ENCODE measurements at regions of chr13 and their contacts with region 1.

Region 1: DNA sequence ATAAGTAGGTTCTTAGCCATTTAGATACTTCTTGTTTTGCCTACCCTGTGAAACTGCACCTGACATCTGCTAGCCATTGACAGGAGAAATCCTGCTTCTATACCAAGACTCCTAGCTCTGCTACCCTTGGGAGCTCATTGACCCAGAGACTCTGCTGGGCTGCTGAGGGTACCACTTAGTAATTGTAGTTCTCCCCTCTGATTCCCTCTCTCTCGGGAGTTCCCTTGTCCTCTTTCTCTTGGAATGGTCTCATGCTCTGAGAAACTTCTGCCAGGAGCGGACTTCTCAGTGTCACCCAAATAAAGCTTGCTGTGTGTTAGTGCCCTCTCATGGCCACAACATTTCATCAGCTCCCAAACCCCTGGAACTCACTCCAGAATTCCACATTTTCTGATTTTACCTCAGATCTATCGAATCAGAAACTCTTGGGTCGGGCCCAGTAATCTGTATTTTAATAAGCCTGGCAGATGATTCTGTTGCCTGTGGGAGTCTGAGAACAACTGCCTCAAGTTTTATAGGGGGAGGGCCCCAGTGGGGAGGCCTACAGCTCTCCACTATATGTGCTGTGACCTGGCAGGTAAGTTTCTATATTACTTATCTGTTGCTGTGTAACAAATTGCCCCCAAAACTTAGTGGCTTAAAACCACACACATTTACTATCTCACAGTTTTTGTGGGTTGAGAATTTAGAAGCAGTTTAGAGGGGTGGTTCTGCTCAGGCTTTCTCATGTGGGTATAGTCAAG is 221.1 kb downstream of the TDRD3 start:
- DNase-seq: no peak
- H3K4me3 ChIP-seq: no peak overlapping the region
- H3K27ac ChIP-seq: no peak overlapping the region
- H3K4me1 ChIP-seq: no peaks in the 10 kb centered on the region
- H3K27me3 ChIP-seq: no peaks in the 10 kb centered on the region
- CTCF ChIP-seq: no peak

Region 2: DNA sequence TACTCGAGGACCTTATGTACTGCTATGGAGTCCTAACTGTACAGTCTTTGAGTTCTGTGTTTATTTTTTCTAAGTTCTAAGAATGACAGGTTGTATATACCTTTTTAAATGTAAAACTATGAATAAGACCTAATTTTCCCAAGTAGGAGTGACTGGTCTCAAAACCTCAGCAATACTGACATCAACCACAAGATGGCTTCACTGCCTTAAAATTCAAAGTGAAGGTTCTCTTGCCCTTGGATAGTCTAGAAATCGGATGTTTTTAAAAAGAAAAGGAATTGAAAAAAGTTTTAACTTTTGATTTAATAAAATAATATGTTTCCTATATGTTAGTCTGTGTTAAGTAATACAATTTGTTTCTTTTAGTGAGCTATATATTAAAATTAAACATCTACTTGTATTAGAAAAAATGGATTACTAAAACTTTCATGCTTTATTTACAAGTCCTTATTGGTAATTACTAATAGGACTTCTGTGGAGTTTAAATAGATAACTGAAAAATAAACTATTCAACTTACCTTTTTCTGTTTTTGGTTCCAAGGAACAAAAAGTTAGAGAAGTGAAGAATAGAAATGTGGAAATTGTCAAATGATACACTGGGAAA is 169.2 kb before region 1 on chr13:
- intact Hi-C with region 1: loop called (anchors 5 kb)
- DNase-seq: peak; percentile 29
- H3K4me3 ChIP-seq: no peak overlapping the region
- H3K27ac ChIP-seq: no peak overlapping the region
- H3K4me1 ChIP-seq: no peaks in the 10 kb centered on the region
- H3K27me3 ChIP-seq: no peaks in the 10 kb centered on the region
- CTCF ChIP-seq: peak; percentile 72

Region 3: DNA sequence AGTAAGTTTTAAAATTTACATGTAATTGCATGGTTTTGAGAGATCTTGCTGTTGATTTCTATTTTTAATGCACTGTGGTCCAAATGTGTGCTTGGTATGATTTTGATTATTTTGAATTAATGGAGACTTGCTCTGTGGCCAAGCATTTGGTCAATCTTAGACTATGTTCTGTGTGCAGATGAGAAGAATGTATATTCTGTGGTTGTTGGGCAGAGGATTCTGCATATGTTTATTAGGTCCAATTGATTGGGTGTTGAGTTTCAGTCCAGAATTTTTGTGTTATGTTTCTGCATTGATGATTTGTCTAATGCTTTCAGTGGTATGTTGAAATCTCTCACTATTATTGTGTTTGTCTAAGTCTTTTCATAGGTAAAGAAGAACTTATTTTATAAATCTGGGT is 138.9 kb before region 1 on chr13:
- intact Hi-C with region 1: loop called (anchors 10 kb)
- DNase-seq: no peak
- H3K4me3 ChIP-seq: no peak overlapping the region
- H3K27ac ChIP-seq: no peak overlapping the region
- H3K4me1 ChIP-seq: no peaks in the 10 kb centered on the region
- H3K27me3 ChIP-seq: no peaks in the 10 kb centered on the region
- CTCF ChIP-seq: no peak

Measured in colonic mucosa (tissue), 4 donors.